Activated B cell treated with CpG ODN at 0.5 μM for 24 hours (primary cell): ENCODE measurements at regions of chr7 and their contacts with region 1.

Region 1: GRCh38 chr7:134954197-134955082 is 31.9 kb upstream of the AGBL3 start:
- DNase-seq: no peak
- ATAC-seq: no peak
- H3K4me3 Mint-ChIP-seq: no peak overlapping the region
- H3K27ac Mint-ChIP-seq: no peak overlapping the region
- H3K4me1 Mint-ChIP-seq: no peaks in the 10 kb centered on the region
- H3K27me3 Mint-ChIP-seq: no peaks in the 10 kb centered on the region
- CTCF ChIP-seq: no peak

Region 2: GRCh38 chr7:134432296-134433152 is 521.9 kb before region 1 on chr7:
- CTCF ChIA-PET with region 1: interaction called, 3 read pairs
- POLR2A ChIA-PET with region 1: no interaction called
- intact Hi-C with region 1: loop called (anchors 1 kb)
- DNase-seq: peak; percentile 56
- ATAC-seq: peak; percentile 89
- H3K4me3 Mint-ChIP-seq: peak overlapping the region; percentile 82
- H3K27ac Mint-ChIP-seq: peak overlapping the region; percentile 82
- H3K4me1 Mint-ChIP-seq: peaks cover 20% of the 10 kb centered on the region
- H3K27me3 Mint-ChIP-seq: no peaks in the 10 kb centered on the region
- CTCF ChIP-seq: no peak

Region 3: GRCh38 chr7:134547397-134548054 is 406.9 kb before region 1 on chr7:
- CTCF ChIA-PET with region 1: no interaction called
- POLR2A ChIA-PET with region 1: no interaction called
- intact Hi-C with region 1: loop called (anchors 1 kb)
- DNase-seq: peak; percentile 42
- ATAC-seq: peak; percentile 78
- H3K4me3 Mint-ChIP-seq: peak overlapping the region; percentile 58
- H3K27ac Mint-ChIP-seq: no peak overlapping the region
- H3K4me1 Mint-ChIP-seq: peaks cover 11% of the 10 kb centered on the region
- H3K27me3 Mint-ChIP-seq: peaks cover 14% of the 10 kb centered on the region
- CTCF ChIP-seq: no peak

Region 4: GRCh38 chr7:134632937-134633540 is 321.4 kb before region 1 on chr7:
- CTCF ChIA-PET with region 1: interaction called, 48 read pairs
- POLR2A ChIA-PET with region 1: no interaction called
- intact Hi-C with region 1: loop called (anchors 1 kb)
- DNase-seq: no peak
- ATAC-seq: peak; percentile 71
- H3K4me3 Mint-ChIP-seq: no peak overlapping the region
- H3K27ac Mint-ChIP-seq: no peak overlapping the region
- H3K4me1 Mint-ChIP-seq: peaks cover 10% of the 10 kb centered on the region
- H3K27me3 Mint-ChIP-seq: peaks cover 14% of the 10 kb centered on the region
- CTCF ChIP-seq: no peak

Region 5: DNA sequence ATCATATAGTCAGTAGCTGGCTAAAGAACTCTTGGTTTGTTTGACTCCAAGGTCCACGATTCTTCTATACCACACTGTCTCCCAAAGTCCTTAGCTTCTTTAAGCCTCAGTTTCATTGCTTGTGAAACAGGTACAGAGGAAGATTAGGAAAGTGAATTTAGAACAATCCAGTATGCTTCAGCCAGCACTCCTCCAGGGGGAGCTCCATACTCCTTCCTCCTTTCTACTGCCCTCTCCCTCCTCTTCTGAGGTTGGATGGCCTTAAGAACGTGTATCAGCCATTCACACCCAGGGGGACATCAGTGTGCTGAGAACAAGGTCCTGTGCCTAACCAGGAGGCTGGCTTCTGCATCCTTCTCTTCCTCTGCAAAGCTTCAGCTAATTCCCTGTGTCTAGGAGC is 229.8 kb before region 1 on chr7:
- CTCF ChIA-PET with region 1: no interaction called
- POLR2A ChIA-PET with region 1: no interaction called
- intact Hi-C with region 1: loop called (anchors 2 kb)
- DNase-seq: no peak
- ATAC-seq: no peak
- H3K4me3 Mint-ChIP-seq: no peak overlapping the region
- H3K27ac Mint-ChIP-seq: no peak overlapping the region
- H3K4me1 Mint-ChIP-seq: no peaks in the 10 kb centered on the region
- H3K27me3 Mint-ChIP-seq: no peaks in the 10 kb centered on the region
- CTCF ChIP-seq: no peak

Region 6: DNA sequence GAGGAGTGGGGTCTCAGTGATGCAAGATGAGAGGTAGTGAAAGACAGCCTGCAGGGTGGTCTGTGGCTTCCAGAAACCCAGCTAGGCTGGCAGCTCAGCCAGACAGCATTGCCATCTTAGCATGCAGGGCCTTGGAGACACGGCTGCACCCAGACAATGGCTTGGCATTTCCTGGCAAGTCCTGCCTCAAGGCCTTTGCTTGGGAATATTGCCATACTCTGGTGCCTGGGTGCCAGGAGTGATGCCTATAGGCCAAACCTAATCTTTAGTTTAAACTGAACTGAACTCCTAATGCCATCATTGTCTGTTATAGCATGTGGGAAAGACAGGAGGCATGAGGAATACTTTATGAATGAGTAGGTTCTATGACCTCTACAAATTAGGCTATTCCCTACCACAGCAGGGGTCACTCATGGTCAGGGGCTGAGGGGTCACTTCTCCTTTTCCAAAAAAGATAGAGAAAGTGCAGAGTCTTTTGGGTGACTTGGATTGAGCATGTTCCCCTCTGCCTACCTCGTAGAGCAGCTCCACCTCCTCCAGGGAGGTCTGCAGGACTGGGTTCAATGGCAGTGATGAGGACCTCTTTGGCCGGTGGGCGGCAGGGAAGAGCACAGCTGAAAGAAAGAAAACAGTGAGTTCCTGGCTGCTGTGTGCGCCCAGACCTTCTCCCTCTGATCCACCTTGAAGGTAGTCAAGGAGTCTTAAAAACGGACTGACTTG is 782.3 kb after region 1 on chr7:
- CTCF ChIA-PET with region 1: no interaction called
- POLR2A ChIA-PET with region 1: no interaction called
- intact Hi-C with region 1: no loop called
- DNase-seq: no peak
- ATAC-seq: no peak
- H3K4me3 Mint-ChIP-seq: no peak overlapping the region
- H3K27ac Mint-ChIP-seq: no peak overlapping the region
- H3K4me1 Mint-ChIP-seq: no peaks in the 10 kb centered on the region
- H3K27me3 Mint-ChIP-seq: peaks cover 5% of the 10 kb centered on the region
- CTCF ChIP-seq: no peak